CD14-positive monocyte (primary cell): ENCODE measurements at regions of chr10 and their contacts with region 1.

Region 1: GRCh38 chr10:124035928-124036558 is 57.4 kb downstream of the CHST15 start:
- DNase-seq: peak; percentile 96 to 98 (median 96)
- H3K4me3 ChIP-seq: peak overlapping the region in 1 of 3 experiments; percentile 39
- H3K4me3 Mint-ChIP-seq: peak overlapping the region; percentile 66 to 75
- H3K27ac ChIP-seq: peak overlapping the region; percentile 63 to 88
- H3K27ac Mint-ChIP-seq: peak overlapping the region; percentile 97 to 100 (median 99)
- H3K4me1 ChIP-seq: peaks cover 83% of the 10 kb centered on the region in 2 donors
- H3K4me1 Mint-ChIP-seq: peaks cover 76% of the 10 kb centered on the region
- H3K27me3 ChIP-seq: no peaks in the 10 kb centered on the region
- H3K27me3 Mint-ChIP-seq: peaks cover 0 to 8% (median 4%) of the 10 kb centered on the region in 3 donors
- CTCF ChIP-seq: no peak

Region 2: GRCh38 chr10:123008439-123009205 is 1027.4 kb before region 1 on chr10 and contains the starts of genes ACADSB and IKZF5:
- intact Hi-C with region 1: no loop called
- DNase-seq: peak; percentile 91 to 98 (median 98)
- H3K4me3 ChIP-seq: peak within 1 kb of the TSS; percentile 86 to 100 (median 93)
- H3K4me3 Mint-ChIP-seq: peak within 1 kb of the TSS; percentile 99 to 100
- H3K27ac ChIP-seq: peak within 1 kb of the TSS; percentile 96 to 97
- H3K27ac Mint-ChIP-seq: peak within 1 kb of the TSS; percentile 99 to 100 (median 100)
- H3K4me1 ChIP-seq: peaks cover 25 to 29% of the 10 kb centered on the region in 2 donors
- H3K4me1 Mint-ChIP-seq: peaks cover 28% of the 10 kb centered on the region
- H3K27me3 ChIP-seq: no peaks in the 10 kb centered on the region
- H3K27me3 Mint-ChIP-seq: peaks cover 0 to 3% (median 1%) of the 10 kb centered on the region in 3 donors
- CTCF ChIP-seq: no peak
- polyA plus RNA-seq, gene ACADSB: 3.9 to 14.7 (median 7.5) TPM
- polyA plus RNA-seq, gene IKZF5: 8.6 to 12.8 (median 9.8) TPM

Region 3: DNA sequence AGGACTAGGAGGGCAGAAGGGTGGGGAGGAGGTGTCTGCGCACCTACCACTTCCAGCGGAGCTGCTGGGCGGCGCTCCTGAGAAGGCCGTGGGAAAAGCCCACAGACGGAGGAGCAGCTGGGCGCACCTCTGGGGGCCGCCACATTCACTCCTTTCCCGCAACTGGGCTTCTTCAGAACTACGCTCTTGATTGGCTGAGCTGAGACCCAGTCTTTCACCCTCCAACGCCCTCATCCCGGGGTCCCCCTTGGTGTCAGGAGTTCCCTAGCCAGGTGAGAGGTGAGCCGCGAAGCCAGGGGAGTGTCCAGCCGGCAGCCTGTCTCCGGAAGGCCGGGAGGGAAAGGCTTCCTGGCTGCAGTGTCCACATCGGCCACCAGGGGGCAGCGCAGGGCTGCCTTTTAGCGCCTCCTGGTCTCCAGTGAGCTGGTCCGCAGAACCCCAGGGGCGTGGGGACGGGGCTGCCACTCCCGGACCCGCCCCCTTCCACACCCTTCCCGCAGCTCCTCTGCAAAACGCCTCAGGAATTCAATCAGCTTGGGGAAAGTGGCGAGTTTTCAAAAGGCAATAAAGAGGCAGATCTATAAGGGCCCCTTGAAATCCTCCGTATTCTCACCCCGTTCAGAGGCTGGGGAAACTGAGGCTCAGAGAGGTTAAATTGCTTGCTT is 41.5 kb before region 1 on chr10:
- intact Hi-C with region 1: loop called (anchors 1 to 5 kb)
- DNase-seq: peak; percentile 81 to 83 (median 81)
- H3K4me3 ChIP-seq: peak overlapping the region; percentile 21 to 75 (median 28)
- H3K4me3 Mint-ChIP-seq: peak overlapping the region; percentile 74 to 79
- H3K27ac ChIP-seq: peak overlapping the region in 1 of 2 donors; percentile 98
- H3K27ac Mint-ChIP-seq: peak overlapping the region; percentile 57 to 100 (median 98)
- H3K4me1 ChIP-seq: peaks cover 56 to 64% of the 10 kb centered on the region in 2 donors
- H3K4me1 Mint-ChIP-seq: peaks cover 63% of the 10 kb centered on the region
- H3K27me3 ChIP-seq: peaks cover 31 to 46% of the 10 kb centered on the region in 2 donors
- H3K27me3 Mint-ChIP-seq: peaks cover 47 to 58% (median 51%) of the 10 kb centered on the region in 3 donors
- CTCF ChIP-seq: peak; percentile 98